PC-3 (cell line): ENCODE measurements at regions of chr1 and their contacts with region 1.

Region 1: GRCh38 chr1:26111530-26112406 is at the start of gene PDIK1L:
- DNase-seq: peak; percentile 96
- ATAC-seq: peak; percentile 77
- H3K4me3 ChIP-seq: peak within 1 kb of the TSS; percentile 97
- H3K27ac ChIP-seq: peak within 1 kb of the TSS; percentile 80
- H3K4me1 ChIP-seq: peaks cover 18% of the 10 kb centered on the region
- H3K27me3 ChIP-seq: no peaks in the 10 kb centered on the region
- CTCF ChIP-seq: no peak
- total RNA-seq, gene PDIK1L: 4.1 and 5.2 TPM in 2 replicates

Region 2: DNA sequence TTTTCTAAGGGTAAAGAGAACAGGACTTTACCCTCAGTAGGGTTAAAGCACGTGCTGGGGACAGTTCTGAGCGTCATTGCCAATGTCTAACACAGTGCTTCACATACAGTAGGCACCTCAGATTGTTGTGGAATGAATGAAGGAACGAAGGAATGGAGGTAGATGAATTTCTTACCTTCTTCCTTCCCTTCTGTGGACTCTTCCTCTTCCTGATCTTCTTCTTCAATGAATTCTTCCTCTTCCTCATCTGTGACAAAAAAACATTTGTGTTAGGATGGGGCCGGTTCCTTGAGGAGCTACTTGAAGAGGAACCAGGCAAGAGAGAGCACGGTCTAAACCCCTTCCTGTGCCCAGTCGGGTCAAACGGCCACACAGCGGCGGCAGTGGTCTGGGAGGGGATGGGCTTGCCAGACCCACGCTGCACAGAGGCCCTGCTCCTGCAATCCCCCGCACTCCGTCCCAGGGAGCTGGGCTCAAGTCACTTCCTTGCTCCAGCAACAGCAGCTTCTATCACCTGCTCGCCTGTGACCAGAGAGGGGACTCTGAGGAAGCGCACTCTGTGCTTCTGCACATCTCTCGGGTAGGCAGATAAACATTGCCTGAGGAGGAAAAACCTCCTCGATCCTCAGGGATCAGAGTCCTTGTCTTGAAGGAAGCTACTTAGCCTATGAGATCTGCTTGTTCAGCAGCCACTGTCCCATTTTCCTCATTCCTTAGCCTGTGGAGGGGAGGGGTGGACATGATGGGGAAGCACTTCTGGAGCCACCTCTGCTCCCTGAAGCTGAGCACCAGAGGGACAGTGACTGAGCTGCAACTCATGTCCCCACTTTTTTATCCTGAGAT is 57.8 kb before region 1 on chr1:
- CTCF ChIA-PET with region 1: no interaction called
- POLR2A ChIA-PET with region 1: no interaction called
- intact Hi-C with region 1: no loop called
- DNase-seq: no peak
- ATAC-seq: no peak
- H3K4me3 ChIP-seq: no peak overlapping the region
- H3K27ac ChIP-seq: no peak overlapping the region
- H3K4me1 ChIP-seq: no peaks in the 10 kb centered on the region
- H3K27me3 ChIP-seq: no peaks in the 10 kb centered on the region
- CTCF ChIP-seq: no peak

Region 3: GRCh38 chr1:26072305-26072704 is 39.5 kb before region 1 on chr1:
- CTCF ChIA-PET with region 1: no interaction called
- POLR2A ChIA-PET with region 1: no interaction called
- intact Hi-C with region 1: no loop called
- DNase-seq: no peak
- ATAC-seq: no peak; the same call in 1 of the 2 replicates
- H3K4me3 ChIP-seq: no peak overlapping the region
- H3K27ac ChIP-seq: no peak overlapping the region
- H3K4me1 ChIP-seq: peaks cover 15% of the 10 kb centered on the region
- H3K27me3 ChIP-seq: no peaks in the 10 kb centered on the region
- CTCF ChIP-seq: no peak

Region 4: DNA sequence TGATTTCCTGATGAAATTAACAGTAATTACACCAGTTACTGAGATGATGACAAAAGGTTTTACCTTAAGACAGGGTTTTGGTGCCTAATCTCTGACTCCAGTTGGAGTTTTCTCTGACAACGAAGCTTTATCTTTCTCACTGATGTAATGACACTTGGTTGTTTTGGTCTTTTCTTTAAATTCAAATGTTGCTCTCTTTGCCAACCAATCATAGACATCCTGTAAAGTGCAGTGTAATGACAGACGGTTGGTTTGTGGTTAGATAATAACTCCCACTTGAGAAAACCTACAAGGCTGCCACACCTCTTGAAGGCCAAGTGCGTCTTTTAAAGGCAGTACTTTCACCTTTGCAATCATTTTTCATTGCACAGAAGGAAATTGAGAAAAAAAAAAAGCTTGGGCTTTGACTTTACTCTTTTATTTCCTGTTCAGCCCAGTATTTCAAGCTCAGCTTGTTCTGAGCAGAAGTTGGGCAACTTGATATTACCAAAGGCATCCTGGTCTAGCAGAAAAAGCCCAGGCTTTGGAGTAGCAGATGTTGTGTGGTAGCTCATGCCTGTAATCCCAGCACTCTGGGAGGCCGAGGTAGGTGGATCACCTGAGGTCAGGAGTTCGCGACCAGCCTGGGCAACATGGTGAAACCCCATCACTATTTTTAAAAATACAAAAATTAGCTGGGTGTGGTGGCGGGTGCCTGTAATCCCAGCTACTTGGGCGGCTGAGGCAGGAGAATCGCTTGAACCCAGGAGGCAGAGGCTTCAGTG is 14.7 kb after region 1 on chr1:
- CTCF ChIA-PET with region 1: no interaction called
- POLR2A ChIA-PET with region 1: no interaction called
- intact Hi-C with region 1: loop called (anchors 1 kb)
- DNase-seq: peak; percentile 92
- ATAC-seq: peak; percentile 72
- H3K4me3 ChIP-seq: peak overlapping the region; percentile 31
- H3K27ac ChIP-seq: peak overlapping the region; percentile 94
- H3K4me1 ChIP-seq: peaks cover 63% of the 10 kb centered on the region
- H3K27me3 ChIP-seq: no peaks in the 10 kb centered on the region
- CTCF ChIP-seq: no peak

Region 5: DNA sequence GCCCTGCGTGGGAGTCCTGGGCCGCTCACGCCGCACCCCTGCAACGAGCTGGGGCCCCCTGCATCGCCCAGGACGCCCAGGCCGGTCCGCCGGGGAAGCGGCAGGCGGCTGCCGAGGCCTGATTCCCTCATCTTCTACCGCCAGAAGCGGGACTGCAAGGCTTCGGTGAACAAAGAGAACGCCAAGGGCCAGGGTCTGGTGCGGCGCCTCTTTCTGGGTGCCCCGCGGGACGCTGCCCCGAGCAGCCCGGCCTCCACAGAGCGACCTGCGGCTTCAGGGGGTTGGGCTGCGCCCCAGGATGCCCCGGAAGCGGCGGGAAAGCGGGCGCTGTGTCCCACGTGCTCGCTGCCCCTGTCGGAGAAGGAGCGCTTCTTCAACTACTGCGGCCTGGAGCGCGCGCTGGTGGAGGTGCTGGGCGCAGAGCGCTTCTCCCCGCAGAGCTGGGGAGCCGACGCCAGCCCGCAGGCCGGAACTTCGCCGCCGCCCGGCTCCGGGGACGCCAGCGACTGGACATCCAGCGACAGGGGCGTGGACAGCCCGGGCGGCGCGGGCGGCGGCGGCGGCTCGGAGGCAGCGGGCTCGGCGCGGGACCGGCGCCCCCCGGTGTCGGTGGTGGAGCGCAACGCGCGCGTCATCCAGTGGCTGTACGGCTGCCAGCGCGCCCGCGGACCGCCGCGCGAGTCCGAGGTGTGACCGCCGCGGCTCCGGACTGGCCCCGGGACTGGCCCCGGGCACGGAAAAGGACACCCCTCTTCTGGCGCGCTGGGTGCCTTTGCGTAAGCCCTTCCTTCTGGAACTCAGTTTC is 49.8 kb after region 1 on chr1:
- CTCF ChIA-PET with region 1: no interaction called
- POLR2A ChIA-PET with region 1: no interaction called
- intact Hi-C with region 1: loop called (anchors 5 kb)
- DNase-seq: peak; percentile 48
- ATAC-seq: peak; percentile 65
- H3K4me3 ChIP-seq: peak overlapping the region; percentile 74
- H3K27ac ChIP-seq: no peak overlapping the region
- H3K4me1 ChIP-seq: peaks cover 7% of the 10 kb centered on the region
- H3K27me3 ChIP-seq: no peaks in the 10 kb centered on the region
- CTCF ChIP-seq: peak; percentile 19; the same call in 1 of the 2 replicates